ENCODE measurements at regions of chr10 and their contacts with region 1.

Region 1: DNA sequence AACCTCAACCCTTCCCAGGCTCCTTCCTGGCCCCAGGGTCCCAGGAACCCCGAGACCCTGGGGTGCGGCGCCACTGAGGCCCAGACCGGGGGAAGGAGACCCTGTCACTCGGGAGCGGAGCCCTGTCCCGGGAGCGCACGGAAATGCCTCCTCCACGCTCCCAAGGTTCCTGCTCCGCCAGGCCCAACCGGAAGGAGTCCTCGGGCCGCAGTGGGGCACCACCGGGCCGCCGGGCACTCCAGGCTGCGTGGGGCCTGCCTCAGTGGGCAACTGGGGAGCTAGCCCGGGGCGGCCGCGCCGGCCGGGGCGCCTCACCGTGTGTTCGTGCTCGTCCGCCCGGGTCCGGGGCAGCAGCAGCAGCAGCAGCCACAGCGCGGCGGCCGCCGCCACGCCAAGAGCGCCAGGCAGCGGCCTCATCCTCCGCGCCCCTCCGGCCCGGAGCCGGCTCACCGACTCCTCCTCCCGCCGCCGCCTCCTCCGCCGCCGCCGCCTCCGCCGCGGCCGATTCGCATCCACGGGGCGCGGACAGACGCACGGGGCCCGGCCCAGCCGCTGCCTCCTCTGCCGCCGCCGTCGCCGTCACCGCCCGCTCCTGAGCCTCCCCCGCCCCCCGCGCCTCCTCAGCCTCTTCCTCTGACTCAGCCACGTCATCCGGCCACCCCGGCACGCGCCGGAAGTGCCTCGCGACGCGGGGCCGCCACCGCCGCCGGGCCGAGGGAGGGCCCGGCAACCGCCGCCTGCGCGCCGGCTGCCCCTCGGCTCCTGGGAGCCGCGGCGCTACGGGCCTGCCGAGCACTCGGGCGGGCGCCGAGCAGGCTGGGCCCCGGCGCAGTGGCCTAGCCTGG is at the start of gene TM9SF3:
- DNase-seq: peak; percentile 87 to 93 (median 91)
- H3K4me3 ChIP-seq: peak within 1 kb of the TSS; percentile 90 to 98 (median 94)
- H3K4me3 Mint-ChIP-seq: peak within 1 kb of the TSS; percentile 91 to 92
- H3K27ac ChIP-seq: peak within 1 kb of the TSS; percentile 91 to 99
- H3K27ac Mint-ChIP-seq: peak within 1 kb of the TSS; percentile 86 to 95 (median 90)
- H3K4me1 ChIP-seq: peaks cover 32 to 44% of the 10 kb centered on the region in 2 donors
- H3K4me1 Mint-ChIP-seq: peaks cover 35% of the 10 kb centered on the region
- H3K27me3 ChIP-seq: no peaks in the 10 kb centered on the region
- H3K27me3 Mint-ChIP-seq: peaks cover 0 to 2% (median 0%) of the 10 kb centered on the region in 3 donors
- CTCF ChIP-seq: no peak
- polyA plus RNA-seq, gene TM9SF3: 23.9 to 67.1 (median 59.9) TPM

Region 2: GRCh38 chr10:96374985-96375830 is 211.4 kb before region 1 on chr10:
- intact Hi-C with region 1: loop called in 1 of 2 experiments (anchors 10 kb)
- DNase-seq: peak; percentile 74 to 86 (median 82)
- H3K4me3 ChIP-seq: peak overlapping the region; percentile 21 to 73 (median 23)
- H3K4me3 Mint-ChIP-seq: peak overlapping the region; percentile 62 to 89
- H3K27ac ChIP-seq: no peak overlapping the region
- H3K27ac Mint-ChIP-seq: peak overlapping the region in 1 of 7 donors; percentile 58
- H3K4me1 ChIP-seq: peaks cover 14 to 19% of the 10 kb centered on the region in 2 donors
- H3K4me1 Mint-ChIP-seq: peaks cover 25% of the 10 kb centered on the region
- H3K27me3 ChIP-seq: peaks cover 0 to 5% of the 10 kb centered on the region in 2 donors
- H3K27me3 Mint-ChIP-seq: peaks cover 16 to 22% (median 19%) of the 10 kb centered on the region in 3 donors
- CTCF ChIP-seq: peak; percentile 99

Region 3: GRCh38 chr10:96683065-96683464 is 96.4 kb after region 1 on chr10:
- intact Hi-C with region 1: no loop called
- DNase-seq: no peak
- H3K4me3 ChIP-seq: no peak overlapping the region
- H3K4me3 Mint-ChIP-seq: no peak overlapping the region
- H3K27ac ChIP-seq: no peak overlapping the region
- H3K27ac Mint-ChIP-seq: peak overlapping the region in 1 of 7 donors; percentile 0
- H3K4me1 ChIP-seq: peaks cover 50 to 55% of the 10 kb centered on the region in 2 donors
- H3K4me1 Mint-ChIP-seq: peaks cover 63% of the 10 kb centered on the region
- H3K27me3 ChIP-seq: no peaks in the 10 kb centered on the region
- H3K27me3 Mint-ChIP-seq: no peaks in the 10 kb centered on the region
- CTCF ChIP-seq: no peak

Region 4: DNA sequence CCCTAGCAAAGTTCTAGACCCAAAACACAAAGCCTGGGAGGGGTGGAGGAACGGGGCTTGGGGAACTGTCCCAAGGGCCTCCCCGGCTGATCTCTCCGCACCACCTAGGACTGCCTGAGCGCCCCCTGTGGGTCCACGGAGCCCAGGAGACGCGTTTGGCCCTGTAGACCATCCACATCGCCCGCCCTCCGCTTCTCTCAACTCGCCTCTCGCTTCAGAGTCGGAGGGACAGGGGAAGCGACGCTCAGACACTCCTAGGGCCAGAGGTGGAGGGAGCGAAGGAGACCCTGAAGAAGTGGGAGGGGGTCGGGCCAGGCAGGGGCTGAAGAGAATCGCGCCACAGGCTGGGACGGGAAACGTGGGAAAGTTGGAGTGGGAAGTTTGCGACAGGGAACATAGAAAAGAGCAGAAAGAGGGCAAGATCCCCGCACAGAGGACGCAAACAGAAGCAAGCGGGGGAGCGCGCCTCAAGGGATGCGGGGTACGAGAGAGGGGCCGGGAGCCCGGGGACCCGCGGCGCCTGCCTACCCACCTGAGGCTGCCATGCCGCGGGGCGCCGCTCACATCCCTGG is 133.3 kb after region 1 on chr10:
- intact Hi-C with region 1: loop called in 1 of 2 experiments (anchors 10 kb)
- DNase-seq: peak; percentile 74 to 85 (median 81)
- H3K4me3 ChIP-seq: peak overlapping the region; percentile 67 to 99 (median 86)
- H3K4me3 Mint-ChIP-seq: peak overlapping the region; percentile 99 to 100
- H3K27ac ChIP-seq: peak overlapping the region; percentile 90 to 92
- H3K27ac Mint-ChIP-seq: peak overlapping the region; percentile 97 to 100 (median 98)
- H3K4me1 ChIP-seq: peaks cover 54 to 55% of the 10 kb centered on the region in 2 donors
- H3K4me1 Mint-ChIP-seq: peaks cover 49% of the 10 kb centered on the region
- H3K27me3 ChIP-seq: no peaks in the 10 kb centered on the region
- H3K27me3 Mint-ChIP-seq: peaks cover 0 to 3% (median 0%) of the 10 kb centered on the region in 3 donors
- CTCF ChIP-seq: peak; percentile 89